Mammary epithelial cell (primary cell): ENCODE measurements at regions of chr4 and their contacts with region 1.

Region 1: GRCh38 chr4:147009875-147010274 is 64.2 kb upstream of the TTC29 start:
- DNase-seq: no peak
- H3K4me3 ChIP-seq: no peak overlapping the region
- H3K27ac ChIP-seq: no peak overlapping the region
- H3K4me1 ChIP-seq: no peaks in the 10 kb centered on the region
- H3K27me3 ChIP-seq: peaks cover 4% of the 10 kb centered on the region
- CTCF ChIP-seq: no peak

Region 2: DNA sequence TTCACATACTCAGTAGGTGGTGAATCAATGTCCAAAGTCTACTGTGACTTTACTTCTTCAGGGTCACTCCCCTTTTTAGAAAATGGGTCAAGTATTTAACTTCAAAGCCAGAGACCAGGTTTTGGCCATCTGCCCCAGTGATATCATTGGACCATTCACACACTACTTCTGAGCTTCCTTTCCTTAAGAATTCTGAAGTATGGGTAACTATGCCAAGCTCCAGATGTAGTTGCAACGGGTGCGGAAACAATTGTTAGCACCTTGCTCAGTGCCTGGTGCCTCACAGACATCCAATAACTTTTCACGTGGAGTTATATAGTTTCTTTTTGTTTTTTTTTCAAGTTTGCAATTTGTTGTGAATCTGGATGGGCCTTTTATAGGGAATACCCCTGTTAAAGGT is 126.8 kb before region 1 on chr4:
- CTCF ChIA-PET with region 1: no interaction called
- dilution Hi-C with region 1: no loop called
- in situ Hi-C with region 1: no loop called
- intact Hi-C with region 1: no loop called
- DNase-seq: no peak
- H3K4me3 ChIP-seq: no peak overlapping the region
- H3K27ac ChIP-seq: no peak overlapping the region
- H3K4me1 ChIP-seq: no peaks in the 10 kb centered on the region
- H3K27me3 ChIP-seq: no peaks in the 10 kb centered on the region
- CTCF ChIP-seq: no peak

Region 3: GRCh38 chr4:146981651-146982050 is 28.2 kb before region 1 on chr4:
- CTCF ChIA-PET with region 1: no interaction called
- dilution Hi-C with region 1: no loop called
- in situ Hi-C with region 1: no loop called
- intact Hi-C with region 1: no loop called
- DNase-seq: no peak
- H3K4me3 ChIP-seq: no peak overlapping the region
- H3K27ac ChIP-seq: no peak overlapping the region
- H3K4me1 ChIP-seq: no peaks in the 10 kb centered on the region
- H3K27me3 ChIP-seq: peaks cover 3% of the 10 kb centered on the region
- CTCF ChIP-seq: no peak

Region 4: DNA sequence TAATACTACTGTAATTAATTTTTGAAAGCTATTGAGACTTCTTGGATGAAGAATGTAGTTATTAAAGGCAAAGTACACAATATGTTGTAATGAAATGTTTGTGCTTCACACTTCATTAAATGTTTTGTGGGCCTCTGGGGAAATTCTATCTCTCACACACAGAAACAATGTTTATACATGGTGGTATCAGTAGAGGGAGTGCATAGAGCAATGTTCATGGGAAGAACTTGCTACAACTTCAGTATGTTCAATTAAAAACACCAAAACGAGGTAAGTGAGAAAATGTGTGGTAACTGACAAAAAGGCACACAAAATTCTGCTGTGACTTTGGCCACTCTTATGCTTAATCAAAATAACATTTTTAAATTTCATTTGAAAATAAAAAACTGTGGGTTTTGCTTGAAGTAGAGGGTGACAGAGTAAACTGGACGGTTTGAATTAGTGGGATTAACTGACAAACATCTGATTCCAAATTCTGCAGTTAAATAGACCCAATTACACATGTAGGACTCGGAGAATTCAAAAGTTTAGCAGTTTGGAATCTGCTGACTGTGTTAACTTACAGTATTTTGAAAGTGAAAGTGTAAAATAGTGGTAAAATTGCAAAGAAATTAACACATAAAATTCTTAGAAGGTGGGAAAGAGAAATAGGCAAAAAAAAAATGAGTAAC is 47.2 kb after region 1 on chr4:
- CTCF ChIA-PET with region 1: no interaction called
- dilution Hi-C with region 1: no loop called
- in situ Hi-C with region 1: no loop called
- intact Hi-C with region 1: no loop called
- DNase-seq: no peak
- H3K4me3 ChIP-seq: peak overlapping the region; percentile 30 to 51 (median 44)
- H3K27ac ChIP-seq: peak overlapping the region; percentile 11
- H3K4me1 ChIP-seq: peaks cover 8% of the 10 kb centered on the region
- H3K27me3 ChIP-seq: no peaks in the 10 kb centered on the region
- CTCF ChIP-seq: peak in 1 of 2 donors; percentile 19

Region 5: DNA sequence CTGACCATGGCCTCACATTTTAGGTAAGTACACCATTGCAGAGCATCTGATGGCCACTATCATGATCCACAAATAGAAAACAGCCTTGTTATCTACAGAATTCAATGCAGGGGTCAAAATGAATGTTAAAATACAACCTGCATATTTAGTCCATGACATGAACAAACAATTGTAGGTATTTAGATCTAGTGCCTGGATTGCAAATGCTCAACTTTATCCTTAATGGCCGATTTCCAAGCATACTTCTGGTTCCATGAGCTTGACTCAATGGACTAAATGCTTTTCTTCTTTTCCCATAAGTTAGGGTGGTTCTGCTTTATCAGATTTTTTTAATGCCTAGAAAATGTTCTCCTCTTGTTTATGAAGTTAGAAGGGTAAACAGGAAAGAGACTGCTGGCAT is 75.0 kb after region 1 on chr4:
- CTCF ChIA-PET with region 1: no interaction called
- dilution Hi-C with region 1: loop called (anchors 5 kb)
- in situ Hi-C with region 1: no loop called
- intact Hi-C with region 1: no loop called
- DNase-seq: no peak
- H3K4me3 ChIP-seq: no peak overlapping the region
- H3K27ac ChIP-seq: no peak overlapping the region
- H3K4me1 ChIP-seq: no peaks in the 10 kb centered on the region
- H3K27me3 ChIP-seq: peaks cover 2% of the 10 kb centered on the region
- CTCF ChIP-seq: no peak

Region 6: DNA sequence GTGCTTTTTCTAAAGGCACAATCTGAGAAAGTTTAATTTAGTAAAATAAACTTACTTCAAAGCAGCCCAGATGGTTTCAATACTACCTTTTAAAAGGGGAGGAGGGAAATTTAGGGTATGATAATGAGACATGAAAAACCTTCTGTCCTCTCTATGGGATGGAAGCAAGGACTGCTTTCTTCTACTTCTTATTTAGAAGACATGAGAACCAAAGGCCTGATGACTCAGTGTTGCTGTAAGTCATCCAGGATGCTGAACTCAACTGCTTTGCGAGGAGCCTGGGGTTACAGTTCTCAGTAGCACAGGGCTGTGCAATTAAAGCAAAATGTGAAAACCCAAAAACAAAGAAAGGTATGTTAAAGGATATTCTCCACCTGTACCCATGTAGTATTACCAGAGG is 330.2 kb after region 1 on chr4:
- CTCF ChIA-PET with region 1: no interaction called
- dilution Hi-C with region 1: no loop called
- in situ Hi-C with region 1: no loop called
- intact Hi-C with region 1: no loop called
- DNase-seq: peak; percentile 68
- H3K4me3 ChIP-seq: no peak overlapping the region
- H3K27ac ChIP-seq: no peak overlapping the region
- H3K4me1 ChIP-seq: peaks cover 11% of the 10 kb centered on the region
- H3K27me3 ChIP-seq: no peaks in the 10 kb centered on the region
- CTCF ChIP-seq: no peak